ENCODE measurements at regions of chr11 and their contacts with region 1.

Region 1: DNA sequence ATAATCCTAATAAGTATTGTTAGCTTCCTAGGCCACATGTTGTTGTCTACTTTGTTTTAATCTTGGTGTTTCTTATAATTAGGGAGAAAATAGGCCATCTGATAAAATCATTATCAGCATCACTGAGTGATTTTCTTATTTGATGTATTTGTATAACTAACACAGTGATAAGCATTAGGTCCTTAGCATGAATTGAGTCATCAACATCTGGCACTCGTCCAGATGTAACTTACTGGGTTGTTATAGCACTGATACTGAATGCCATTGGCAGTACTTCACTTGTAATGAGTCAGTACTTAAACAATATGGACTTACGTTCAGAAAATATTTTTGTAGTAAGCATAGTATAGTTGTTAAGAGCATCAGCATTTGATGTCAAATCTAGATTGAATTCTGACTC is 16.2 kb downstream of the API5 start:
- DNase-seq: no peak
- ATAC-seq: no peak
- H3K4me3 ChIP-seq: no peak overlapping the region
- H3K27ac ChIP-seq: no peak overlapping the region
- H3K4me1 ChIP-seq: no peaks in the 10 kb centered on the region
- H3K27me3 ChIP-seq: no peaks in the 10 kb centered on the region
- CTCF ChIP-seq: no peak

Region 2: GRCh38 chr11:43447151-43447550 is 119.2 kb after region 1 on chr11:
- intact Hi-C with region 1: loop called in 1 of 2 experiments (anchors 10 kb)
- DNase-seq: no peak
- ATAC-seq: no peak
- H3K4me3 ChIP-seq: no peak overlapping the region
- H3K27ac ChIP-seq: no peak overlapping the region
- H3K4me1 ChIP-seq: no peaks in the 10 kb centered on the region
- H3K27me3 ChIP-seq: no peaks in the 10 kb centered on the region
- CTCF ChIP-seq: no peak

Measured in psoas muscle (tissue), 8 donors.